PC-9 (cell line): ENCODE measurements at regions of chr2 and their contacts with region 1.

Region 1: GRCh38 chr2:215188078-215188477 is 49.7 kb upstream of the ABCA12 start:
- DNase-seq: no peak
- H3K4me3 ChIP-seq: no peak overlapping the region
- H3K27ac ChIP-seq: no peak overlapping the region
- H3K4me1 ChIP-seq: no peaks in the 10 kb centered on the region
- H3K27me3 ChIP-seq: no peaks in the 10 kb centered on the region
- CTCF ChIP-seq: no peak

Region 2: DNA sequence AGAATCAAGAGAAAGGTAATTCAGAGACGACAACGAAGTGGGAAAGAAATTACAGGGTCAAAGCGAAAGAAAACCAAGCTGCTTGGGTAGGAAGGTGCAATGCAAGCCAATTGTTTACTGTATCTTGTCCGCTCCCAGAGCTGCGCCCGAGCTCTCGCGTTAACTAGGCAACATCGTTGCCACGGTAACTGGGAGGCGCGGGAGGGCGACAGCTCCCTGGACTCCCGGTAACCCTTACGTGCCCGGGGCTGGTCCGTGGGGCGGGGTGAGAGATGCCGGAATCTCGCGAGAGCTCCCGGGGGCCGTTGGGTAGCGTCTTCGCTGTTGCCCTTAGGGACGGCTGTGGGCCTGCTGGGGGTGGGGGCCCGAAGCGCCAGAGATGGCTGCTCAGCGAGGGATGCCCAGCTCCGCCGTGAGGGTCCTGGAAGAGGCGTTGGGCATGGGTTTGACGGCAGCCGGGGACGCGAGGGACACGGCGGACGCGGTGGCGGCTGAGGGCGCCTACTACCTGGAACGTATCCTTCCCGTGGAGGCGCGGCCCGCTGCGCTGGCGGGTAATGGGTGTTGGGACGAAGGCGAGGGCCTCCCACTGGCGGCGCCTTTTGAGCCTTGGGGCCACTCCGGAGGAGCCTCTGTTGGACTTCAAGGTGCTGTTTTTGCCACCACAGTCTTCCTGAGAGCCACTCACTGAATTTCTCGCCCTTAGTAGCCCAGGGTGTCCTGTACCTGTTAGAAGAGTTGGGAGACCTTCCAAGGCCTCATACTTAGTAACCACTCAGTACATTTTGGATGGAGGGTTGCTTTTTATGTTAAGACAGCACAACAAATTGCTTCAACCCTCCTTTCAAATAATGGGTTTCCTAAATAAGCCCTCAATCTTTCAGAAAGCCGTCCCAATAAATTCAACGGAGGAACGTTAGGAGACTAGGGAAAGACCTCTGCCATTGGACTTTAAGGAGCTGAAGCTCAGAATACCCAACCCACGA is 1903.7 kb before region 1 on chr2 and contains the start of gene SPAG16:
- CTCF ChIA-PET with region 1: no interaction called
- POLR2A ChIA-PET with region 1: interaction called, 13 read pairs
- intact Hi-C with region 1: no loop called
- DNase-seq: peak; percentile 88 to 92
- H3K4me3 ChIP-seq: peak within 1 kb of the TSS; percentile 70
- H3K27ac ChIP-seq: peak within 1 kb of the TSS; percentile 57
- H3K4me1 ChIP-seq: peaks cover 33% of the 10 kb centered on the region
- H3K27me3 ChIP-seq: no peaks in the 10 kb centered on the region
- CTCF ChIP-seq: no peak
- total RNA-seq, gene SPAG16: 30.0 and 31.7 TPM in 2 replicates

Region 3: GRCh38 chr2:215751200-215751910 is 563.3 kb after region 1 on chr2:
- CTCF ChIA-PET with region 1: interaction called, 3 read pairs
- POLR2A ChIA-PET with region 1: interaction called, 11 read pairs
- intact Hi-C with region 1: no loop called
- DNase-seq: peak in 1 of 2 experiments; percentile 73
- H3K4me3 ChIP-seq: no peak overlapping the region
- H3K27ac ChIP-seq: no peak overlapping the region
- H3K4me1 ChIP-seq: peaks cover 27% of the 10 kb centered on the region
- H3K27me3 ChIP-seq: no peaks in the 10 kb centered on the region
- CTCF ChIP-seq: no peak